HEK293 (cell line): ENCODE measurements at regions of chr6 and their contacts with region 1.

Region 1: GRCh38 chr6:157756708-157757429 is 66.2 kb upstream of the SNX9 start:
- H3K4me3 ChIP-seq: no peak overlapping the region
- H3K27ac ChIP-seq: no peak overlapping the region
- H3K4me1 ChIP-seq: 0 out of 2 replicates have a peak, but pooled peaks cover 3% of the 10 kb centered on the region
- CTCF ChIP-seq: peak; percentile 93

Region 2: DNA sequence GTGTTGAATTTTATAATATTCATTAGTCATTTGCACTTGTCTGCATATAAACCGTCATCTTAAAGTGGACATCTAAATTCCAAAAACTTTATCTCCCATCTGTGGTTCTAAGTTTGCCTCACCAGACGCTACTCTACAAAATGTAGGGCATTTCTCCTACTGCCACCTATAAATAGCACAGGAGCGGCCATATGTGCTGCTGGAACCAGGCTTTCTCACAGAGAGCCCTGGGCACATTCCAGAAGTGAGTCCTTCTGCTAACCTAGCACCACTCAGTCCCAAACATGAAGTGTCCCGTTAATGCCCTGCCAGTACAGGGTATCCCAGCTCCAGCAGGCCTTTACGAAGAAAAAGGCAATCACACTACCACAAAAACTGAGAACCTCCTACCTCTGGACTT is 587.2 kb before region 1 on chr6:
- CTCF ChIA-PET with region 1: no interaction called
- POLR2A ChIA-PET with region 1: no interaction called
- H3K4me3 ChIP-seq: no peak overlapping the region
- H3K27ac ChIP-seq: no peak overlapping the region
- H3K4me1 ChIP-seq: no peaks in the 10 kb centered on the region
- CTCF ChIP-seq: no peak

Region 3: DNA sequence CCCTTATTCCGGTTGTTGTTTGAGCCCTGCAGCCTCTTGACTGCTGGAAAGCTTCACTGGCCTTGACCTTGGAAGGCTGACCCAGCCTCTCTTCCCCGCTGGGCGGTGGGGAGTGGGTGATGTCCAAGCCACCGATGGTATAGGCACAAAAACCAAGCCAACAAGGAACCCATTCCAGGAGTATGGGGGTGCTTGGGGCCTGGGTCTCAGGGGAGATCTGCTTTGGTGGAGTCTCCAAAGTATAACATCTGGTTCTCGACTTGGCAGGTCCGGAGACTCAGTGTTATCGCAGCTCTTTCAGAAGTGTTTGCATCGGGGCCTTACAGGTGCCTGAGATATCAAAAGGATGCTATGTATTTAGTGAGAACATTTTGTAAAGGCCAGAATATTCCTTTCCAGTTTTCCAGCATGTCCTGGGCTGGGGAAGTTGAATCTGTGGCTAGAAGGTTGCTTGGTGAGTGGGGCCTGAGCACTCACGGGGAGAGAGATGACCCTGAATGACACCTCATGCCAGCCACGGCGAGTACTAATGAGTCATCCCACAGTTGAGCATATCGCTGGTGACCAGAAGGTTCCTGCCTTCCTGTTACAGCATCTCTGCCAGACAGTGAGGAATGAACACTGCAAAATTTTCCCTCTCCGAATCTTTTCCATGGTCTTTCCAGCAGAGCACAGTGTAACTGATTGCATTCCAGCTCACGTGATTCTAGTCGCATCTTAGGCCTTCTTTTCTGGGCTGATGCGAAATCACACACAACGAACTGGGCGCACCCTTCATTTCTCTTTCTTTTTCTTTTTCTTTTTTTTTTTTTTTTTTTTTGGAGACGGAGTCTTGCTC is 242.0 kb before region 1 on chr6:
- CTCF ChIA-PET with region 1: no interaction called
- POLR2A ChIA-PET with region 1: no interaction called
- H3K4me3 ChIP-seq: no peak overlapping the region
- H3K27ac ChIP-seq: no peak overlapping the region
- H3K4me1 ChIP-seq: no peaks in the 10 kb centered on the region
- CTCF ChIP-seq: no peak

Region 4: DNA sequence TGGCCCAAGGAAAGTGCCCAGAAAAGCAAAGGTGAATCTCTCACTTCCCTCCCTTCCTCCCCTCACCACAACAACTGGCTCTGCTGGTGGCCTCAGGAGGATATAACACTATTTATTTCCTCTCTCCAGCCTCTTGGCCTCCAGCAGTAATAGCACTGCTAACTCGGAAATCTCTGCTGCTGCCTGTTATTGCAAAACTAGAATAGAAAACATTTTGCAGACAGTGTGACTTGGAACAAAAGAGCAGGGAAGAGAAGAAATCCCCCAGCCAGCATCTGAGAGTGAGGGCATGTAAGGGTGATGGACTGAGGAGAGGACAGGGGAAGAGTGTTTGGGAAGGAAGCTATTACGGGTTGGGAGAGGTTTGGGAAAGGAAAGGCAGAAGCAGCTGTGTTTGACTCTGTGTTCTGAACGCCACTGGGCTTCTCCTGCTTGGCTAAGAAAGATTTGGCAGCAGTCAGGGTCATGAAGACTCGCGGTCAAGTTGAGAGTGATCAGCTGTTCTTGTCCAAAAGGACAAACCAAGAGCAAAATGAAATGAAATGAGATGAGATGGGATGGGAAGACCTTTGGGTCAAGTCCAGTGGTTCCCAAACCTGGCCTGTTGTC is 14.8 kb before region 1 on chr6:
- CTCF ChIA-PET with region 1: interaction called, 24 read pairs
- POLR2A ChIA-PET with region 1: no interaction called
- H3K4me3 ChIP-seq: no peak overlapping the region
- H3K27ac ChIP-seq: no peak overlapping the region
- H3K4me1 ChIP-seq: no peaks in the 10 kb centered on the region
- CTCF ChIP-seq: no peak

Region 5: DNA sequence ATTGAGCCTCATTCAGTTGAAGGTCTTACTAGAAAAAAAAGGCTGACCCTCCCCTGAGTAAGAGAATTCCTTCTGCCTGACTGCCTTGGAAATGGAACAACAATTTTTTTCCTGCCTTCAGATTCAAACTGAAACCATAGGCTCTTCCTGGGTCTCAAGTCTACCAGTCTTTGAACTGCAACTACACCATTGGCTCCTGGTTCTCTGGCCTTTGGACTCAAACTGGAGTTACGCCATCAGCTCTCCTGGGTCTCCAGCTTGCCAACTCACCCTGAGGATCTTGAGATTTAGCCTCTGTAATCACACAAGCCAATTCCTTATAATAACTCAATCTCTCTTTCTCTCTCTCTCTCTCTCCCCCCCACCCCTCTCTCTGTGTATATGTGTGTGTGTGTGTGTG is 30.2 kb after region 1 on chr6:
- CTCF ChIA-PET with region 1: interaction called, 13 read pairs
- POLR2A ChIA-PET with region 1: no interaction called
- H3K4me3 ChIP-seq: no peak overlapping the region
- H3K27ac ChIP-seq: no peak overlapping the region
- H3K4me1 ChIP-seq: no peaks in the 10 kb centered on the region
- CTCF ChIP-seq: no peak

Region 6: GRCh38 chr6:157806131-157806855 is 49.4 kb after region 1 on chr6:
- CTCF ChIA-PET with region 1: interaction called, 11 read pairs
- POLR2A ChIA-PET with region 1: interaction called, 3 read pairs
- H3K4me3 ChIP-seq: no peak overlapping the region
- H3K27ac ChIP-seq: no peak overlapping the region
- H3K4me1 ChIP-seq: no peaks in the 10 kb centered on the region
- CTCF ChIP-seq: no peak

Region 7: GRCh38 chr6:157831424-157832249 is 74.8 kb after region 1 on chr6:
- CTCF ChIA-PET with region 1: interaction called, 11 read pairs
- POLR2A ChIA-PET with region 1: no interaction called
- H3K4me3 ChIP-seq: no peak overlapping the region
- H3K27ac ChIP-seq: peak overlapping the region; percentile 3; the same call in 1 of the 2 replicates
- H3K4me1 ChIP-seq: peaks cover 23% of the 10 kb centered on the region
- CTCF ChIP-seq: no peak

Region 8: GRCh38 chr6:157845493-157846259 is 88.8 kb after region 1 on chr6:
- CTCF ChIA-PET with region 1: interaction called, 11 read pairs
- POLR2A ChIA-PET with region 1: no interaction called
- H3K4me3 ChIP-seq: no peak overlapping the region
- H3K27ac ChIP-seq: no peak overlapping the region
- H3K4me1 ChIP-seq: peaks cover 18% of the 10 kb centered on the region
- CTCF ChIP-seq: no peak

Region 9: DNA sequence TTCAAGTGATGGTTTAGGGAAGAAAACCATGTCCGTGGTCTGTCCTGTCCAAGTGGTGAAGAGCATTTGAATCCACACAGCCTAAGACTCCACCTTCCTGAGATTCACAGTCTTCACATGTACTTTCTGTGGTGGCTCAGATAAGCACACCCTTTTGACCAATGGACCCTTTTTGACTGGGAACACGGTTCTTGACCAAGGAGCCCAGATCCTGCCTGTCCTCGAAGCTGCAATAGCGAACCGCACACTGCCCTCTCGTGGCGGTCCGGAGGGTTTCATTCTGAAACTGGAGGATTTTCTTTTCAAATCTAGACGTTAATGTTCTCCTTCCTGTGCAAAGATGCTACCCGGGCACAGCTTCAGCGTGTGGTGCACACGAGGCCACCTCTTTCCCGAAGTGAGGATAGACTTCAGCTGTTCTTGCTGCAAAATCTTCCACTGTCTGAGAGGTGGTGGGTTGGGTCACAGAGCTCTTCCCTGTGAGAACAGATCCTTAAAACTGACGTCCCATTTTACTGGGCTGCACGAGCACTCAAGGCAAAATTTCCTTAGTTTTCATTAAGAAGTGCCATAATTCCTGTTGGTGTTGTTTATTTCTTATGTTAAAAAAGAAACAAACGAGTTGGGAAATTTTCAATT is 315.3 kb after region 1 on chr6:
- CTCF ChIA-PET with region 1: interaction called, 10 read pairs
- POLR2A ChIA-PET with region 1: no interaction called
- H3K4me3 ChIP-seq: no peak overlapping the region
- H3K27ac ChIP-seq: no peak overlapping the region
- H3K4me1 ChIP-seq: no peaks in the 10 kb centered on the region
- CTCF ChIP-seq: peak; percentile 64; the same call in 1 of the 2 replicates